Gastrocnemius medialis (tissue), 4 donors: ENCODE measurements at regions of chr14 and their contacts with region 1.

Region 1: GRCh38 chr14:67285876-67286452 is 44.7 kb downstream of the PALS1 start:
- DNase-seq: no peak
- ATAC-seq: no peak
- H3K4me3 ChIP-seq: no peak overlapping the region
- H3K27ac ChIP-seq: no peak overlapping the region
- H3K4me1 ChIP-seq: no peaks in the 10 kb centered on the region
- H3K27me3 ChIP-seq: no peaks in the 10 kb centered on the region
- CTCF ChIP-seq: peak; percentile 37 to 69 (median 53)
- POLR2A ChIP-seq: no peak

Region 2: GRCh38 chr14:66359500-66359899 is 926.5 kb before region 1 on chr14:
- in situ Hi-C with region 1: loop called (anchors 25 kb)
- intact Hi-C with region 1: loop called (anchors 10 kb)
- DNase-seq: no peak
- ATAC-seq: no peak
- H3K4me3 ChIP-seq: no peak overlapping the region
- H3K27ac ChIP-seq: no peak overlapping the region
- H3K4me1 ChIP-seq: no peaks in the 10 kb centered on the region
- H3K27me3 ChIP-seq: no peaks in the 10 kb centered on the region
- CTCF ChIP-seq: peak; percentile 30 to 72 (median 64)
- POLR2A ChIP-seq: no peak

Region 3: GRCh38 chr14:67166450-67166853 is 119.5 kb before region 1 on chr14:
- in situ Hi-C with region 1: loop called (anchors 5 to 10 kb)
- intact Hi-C with region 1: loop called (anchors 1 kb)
- DNase-seq: no peak
- ATAC-seq: no peak
- H3K4me3 ChIP-seq: no peak overlapping the region
- H3K27ac ChIP-seq: no peak overlapping the region
- H3K4me1 ChIP-seq: no peaks in the 10 kb centered on the region
- H3K27me3 ChIP-seq: no peaks in the 10 kb centered on the region
- CTCF ChIP-seq: peak; percentile 40 to 64 (median 59)
- POLR2A ChIP-seq: no peak

Region 4: DNA sequence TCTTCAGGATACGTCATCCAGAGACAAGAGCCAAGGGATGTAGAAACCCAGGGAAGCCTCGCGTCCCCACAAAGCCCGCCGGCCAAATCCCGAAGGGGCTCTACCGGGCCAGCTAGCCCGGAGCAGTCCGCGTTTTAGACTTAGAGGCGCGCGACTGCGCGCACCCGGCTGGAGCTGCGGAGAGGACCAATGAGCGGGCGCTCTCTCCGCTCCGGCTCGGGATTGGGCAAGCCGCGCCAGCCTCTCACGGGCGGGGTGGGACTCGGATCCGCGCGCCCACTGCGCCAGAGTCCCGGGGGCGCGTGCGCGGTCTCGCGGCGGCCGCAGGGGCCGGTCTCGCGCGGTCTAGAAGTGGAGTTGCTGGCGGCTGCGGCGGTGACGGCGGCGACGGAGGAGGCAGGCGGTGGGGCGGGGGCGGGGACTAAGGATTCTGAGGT is 45.0 kb before region 1 on chr14:
- in situ Hi-C with region 1: no loop called
- intact Hi-C with region 1: loop called (anchors 5 kb)
- DNase-seq: peak; percentile 95 to 98
- ATAC-seq: peak; percentile 86 to 88
- H3K4me3 ChIP-seq: peak overlapping the region; percentile 85 to 95 (median 92)
- H3K27ac ChIP-seq: peak overlapping the region; percentile 94 to 99 (median 96)
- H3K4me1 ChIP-seq: peaks cover 8 to 22% of the 10 kb centered on the region in 2 donors
- H3K27me3 ChIP-seq: no peaks in the 10 kb centered on the region
- CTCF ChIP-seq: no peak
- POLR2A ChIP-seq: peak; percentile 86 to 88